ENCODE measurements at regions of chr2 and their contacts with region 1.

Region 1: GRCh38 chr2:222024932-222025880 is 273.6 kb downstream of the PAX3 start:
- DNase-seq: peak; percentile 42
- ATAC-seq: peak; percentile 83
- H3K4me3 ChIP-seq: no peak overlapping the region
- H3K27ac ChIP-seq: no peak overlapping the region
- H3K4me1 ChIP-seq: no peaks in the 10 kb centered on the region
- H3K27me3 ChIP-seq: peaks cover 5% of the 10 kb centered on the region
- CTCF ChIP-seq: peak; percentile 61
- POLR2A ChIP-seq: no peak
- RAD21 ChIP-seq: peak; percentile 51

Region 2: GRCh38 chr2:222013889-222014288 is 11.3 kb before region 1 on chr2:
- CTCF ChIA-PET with region 1: interaction called, 29 read pairs
- POLR2A ChIA-PET with region 1: no interaction called
- dilution Hi-C with region 1: no loop called
- in situ Hi-C with region 1: no loop called
- intact Hi-C with region 1: no loop called
- DNase-seq: no peak
- ATAC-seq: no peak
- H3K4me3 ChIP-seq: no peak overlapping the region
- H3K27ac ChIP-seq: no peak overlapping the region
- H3K4me1 ChIP-seq: no peaks in the 10 kb centered on the region
- H3K27me3 ChIP-seq: no peaks in the 10 kb centered on the region; the same call in 1 of the 2 replicates
- CTCF ChIP-seq: no peak
- POLR2A ChIP-seq: no peak
- RAD21 ChIP-seq: no peak

Region 3: DNA sequence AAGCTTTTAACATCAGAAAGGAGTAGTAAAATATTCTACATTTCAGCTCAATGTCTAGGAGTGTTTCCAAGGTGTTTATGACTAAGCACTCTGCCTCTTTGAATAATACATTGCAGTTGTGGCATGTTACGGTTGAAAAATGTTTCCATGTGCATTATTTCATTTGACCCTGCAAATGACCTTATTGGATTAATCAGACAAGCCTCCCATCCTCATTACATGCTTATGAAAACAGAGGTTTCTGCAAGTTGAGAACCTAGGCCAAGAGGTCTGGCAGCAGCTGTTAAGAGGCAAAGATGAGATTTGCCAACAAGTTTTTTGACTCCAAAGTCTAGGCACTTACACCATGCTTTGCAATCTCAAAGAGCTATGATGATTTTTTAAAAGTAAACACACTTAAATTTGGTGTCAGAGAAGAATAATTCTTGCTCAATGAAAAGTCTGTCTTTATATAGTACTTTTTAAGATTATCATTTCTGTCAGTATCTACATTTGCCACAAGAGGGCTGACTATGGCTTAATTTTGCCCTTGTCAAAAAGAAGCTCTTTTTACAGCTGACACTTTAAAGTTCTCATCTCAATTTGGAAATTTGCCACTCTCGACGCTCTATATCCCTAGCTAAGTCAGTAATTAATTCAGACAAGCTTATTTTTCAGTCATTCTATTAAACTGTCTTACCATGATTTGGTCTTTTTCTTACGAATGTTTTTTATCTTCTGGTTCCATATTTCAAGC is 13.0 kb after region 1 on chr2:
- CTCF ChIA-PET with region 1: interaction called, 24 read pairs
- POLR2A ChIA-PET with region 1: no interaction called
- dilution Hi-C with region 1: no loop called
- in situ Hi-C with region 1: no loop called
- intact Hi-C with region 1: no loop called
- DNase-seq: peak; percentile 13
- ATAC-seq: no peak
- H3K4me3 ChIP-seq: no peak overlapping the region
- H3K27ac ChIP-seq: no peak overlapping the region
- H3K4me1 ChIP-seq: no peaks in the 10 kb centered on the region
- H3K27me3 ChIP-seq: no peaks in the 10 kb centered on the region
- CTCF ChIP-seq: peak; percentile 36
- POLR2A ChIP-seq: no peak
- RAD21 ChIP-seq: no peak